Right cardiac atrium (tissue), 5 donors: ENCODE measurements at regions of chr2 and their contacts with region 1.

Region 1: DNA sequence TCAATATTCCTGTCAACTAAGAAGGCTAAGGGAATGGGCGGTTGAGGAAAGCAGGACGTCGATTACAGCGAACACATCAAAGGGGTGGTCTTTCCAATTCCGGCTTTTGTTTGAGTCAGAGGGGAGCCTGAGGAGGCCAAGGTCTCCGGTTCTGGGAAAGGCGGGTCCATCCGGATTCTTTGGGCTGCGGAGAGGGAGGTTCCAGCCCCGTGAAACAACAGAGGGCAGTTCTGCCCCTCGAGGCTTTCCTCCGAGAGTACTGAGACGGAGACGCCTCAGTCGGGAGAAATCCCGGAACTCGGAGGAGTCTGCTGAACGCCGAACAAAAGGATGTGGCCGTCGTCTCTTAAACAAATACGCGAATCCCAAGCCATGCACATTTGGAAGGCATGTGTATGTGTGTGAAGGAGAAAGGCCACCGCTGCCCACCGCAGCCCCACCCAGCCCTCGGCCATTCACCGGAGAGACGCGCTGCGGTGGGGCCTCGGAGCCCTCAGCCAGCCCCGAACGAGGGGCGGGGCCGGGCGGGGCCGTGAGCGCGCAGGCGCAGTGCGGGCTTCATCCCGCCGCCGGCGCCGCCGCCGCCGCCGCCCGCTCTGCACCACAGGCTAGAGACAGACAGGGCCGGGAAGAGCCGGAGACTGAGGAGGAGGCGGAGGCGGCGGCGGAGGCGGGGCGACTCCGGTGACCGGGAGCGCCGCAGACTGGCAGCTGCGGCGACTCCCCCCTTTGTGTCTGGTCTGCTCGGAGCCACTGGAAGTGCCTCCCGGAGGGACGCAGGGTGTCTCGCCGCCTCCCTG is at the start of gene BMPR2:
- DNase-seq: peak; percentile 90 to 96 (median 95)
- ATAC-seq: peak; percentile 89 to 93
- H3K4me3 ChIP-seq: peak within 1 kb of the TSS; percentile 95
- H3K27ac ChIP-seq: peak within 1 kb of the TSS; percentile 99
- H3K4me1 ChIP-seq: no peaks in the 10 kb centered on the region
- H3K27me3 ChIP-seq: no peaks in the 10 kb centered on the region
- total RNA-seq, gene BMPR2: 50.9 to 64.7 (median 55.6) TPM

Region 2: DNA sequence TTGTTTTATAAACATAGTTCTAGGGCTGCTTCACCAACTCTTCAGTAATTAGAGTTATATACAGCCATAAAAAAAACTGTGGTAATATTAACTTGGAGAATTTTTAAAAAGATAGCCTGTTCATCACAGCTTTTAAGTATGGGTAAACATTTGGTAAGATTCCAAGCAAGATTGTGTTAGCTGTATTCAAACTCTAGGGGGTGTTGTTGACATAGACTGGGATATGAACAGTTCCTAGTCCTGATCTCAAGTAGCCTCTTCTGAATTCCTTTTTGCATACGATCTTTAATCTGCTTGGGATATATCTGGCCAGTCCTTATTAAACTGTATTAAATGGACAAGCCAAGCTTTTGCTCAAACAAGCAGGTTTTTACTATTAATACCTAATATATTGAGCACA is 96.9 kb before region 1 on chr2:
- intact Hi-C with region 1: loop called in 1 of 4 experiments (anchors 10 kb)
- DNase-seq: no peak
- ATAC-seq: peak; percentile 72 to 76
- H3K4me3 ChIP-seq: no peak overlapping the region
- H3K27ac ChIP-seq: no peak overlapping the region
- H3K4me1 ChIP-seq: peaks cover 2% of the 10 kb centered on the region
- H3K27me3 ChIP-seq: no peaks in the 10 kb centered on the region

Region 3: GRCh38 chr2:202450785-202451184 is 75.0 kb after region 1 on chr2:
- intact Hi-C with region 1: loop called in 1 of 4 experiments (anchors 10 kb)
- DNase-seq: no peak
- ATAC-seq: peak; percentile 82 to 91
- H3K4me3 ChIP-seq: no peak overlapping the region
- H3K27ac ChIP-seq: no peak overlapping the region
- H3K4me1 ChIP-seq: peaks cover 3% of the 10 kb centered on the region
- H3K27me3 ChIP-seq: no peaks in the 10 kb centered on the region